GM12878 (cell line): ENCODE measurements at regions of chr1 and their contacts with region 1.

Region 1: DNA sequence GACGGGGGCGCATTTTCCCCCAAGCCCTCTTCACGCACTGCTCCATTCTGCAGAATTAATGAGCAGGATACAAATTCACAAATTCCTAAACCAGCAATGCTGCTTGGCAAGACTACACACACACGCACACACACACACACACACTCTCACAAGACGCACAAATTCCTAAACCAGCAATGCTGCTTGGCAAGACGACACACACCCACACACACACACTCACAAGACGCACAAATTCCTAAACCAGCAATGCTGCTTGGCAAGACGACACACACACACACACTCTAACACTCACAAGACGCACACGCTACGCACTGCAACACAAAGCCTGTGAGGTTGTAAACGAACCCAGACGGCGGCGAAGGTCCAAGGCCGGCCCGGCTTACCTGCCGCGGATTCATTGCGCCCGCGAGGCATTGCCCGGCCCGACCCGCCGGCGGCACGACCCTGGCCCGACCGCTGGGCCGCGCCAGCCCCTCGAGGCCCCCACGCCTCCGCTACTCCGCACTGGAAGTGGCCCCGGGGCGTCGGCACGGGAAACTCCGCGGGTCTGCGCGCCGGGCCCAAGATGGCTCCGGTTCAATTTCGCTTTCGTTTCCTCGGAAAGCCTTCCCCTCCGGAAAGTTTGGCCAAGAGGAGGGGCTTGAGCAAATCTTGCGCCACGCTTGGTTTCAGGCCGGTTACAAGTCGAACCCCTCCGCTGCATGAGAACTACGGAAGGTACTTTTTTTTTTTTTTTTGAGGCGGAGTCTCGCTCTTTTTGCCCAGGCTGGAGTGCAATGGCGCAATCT is at the start of gene ADAR:
- DNase-seq: peak; percentile 89
- ATAC-seq: peak; percentile 74
- H3K4me3 ChIP-seq: peak within 1 kb of the TSS; percentile 80
- H3K27ac ChIP-seq: peak within 1 kb of the TSS; percentile 100
- H3K4me1 ChIP-seq: peaks cover 47% of the 10 kb centered on the region
- H3K27me3 ChIP-seq: no peaks in the 10 kb centered on the region
- CTCF ChIP-seq: 0 out of 6 replicates have a peak, but pooled peaks of 2 of the 3 experiments have one; percentile 4 to 5
- EP300 ChIP-seq: 0 out of 4 replicates have a peak, but pooled peaks of 1 of the 2 experiments have one; percentile 16
- POLR2A ChIP-seq: peak; percentile 84
- RAD21 ChIP-seq: no peak
- polyA plus RNA-seq, gene ADAR: 55.5 to 105 TPM

Region 2: DNA sequence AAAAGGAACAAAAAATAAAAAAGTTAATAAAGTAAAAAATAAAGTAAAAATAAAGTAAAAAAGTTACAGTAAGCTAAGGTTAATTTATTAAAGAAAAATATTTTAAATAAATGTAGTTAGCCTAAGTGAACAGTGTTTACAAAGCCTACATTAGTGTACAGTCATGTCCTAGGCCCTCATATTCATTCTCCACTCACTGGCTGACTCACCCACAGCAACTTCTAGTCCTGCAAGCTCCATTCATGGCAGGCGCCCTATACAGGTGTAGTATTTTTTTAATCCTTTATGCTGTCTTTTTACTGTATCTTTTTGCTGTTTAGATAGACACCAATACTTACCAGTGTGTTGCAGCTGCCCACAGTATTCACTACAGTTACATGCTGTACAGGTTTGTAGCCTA is 12.2 kb before region 1 on chr1:
- CTCF ChIA-PET with region 1: interaction called, 11 read pairs
- POLR2A ChIA-PET with region 1: interaction called, 9 read pairs
- RAD21 ChIA-PET with region 1: interaction called, 5 read pairs
- SMC1A ChIA-PET with region 1: interaction called, 36 read pairs
- in situ Hi-C with region 1: no loop called
- intact Hi-C with region 1: no loop called
- DNase-seq: no peak
- ATAC-seq: no peak
- H3K4me3 ChIP-seq: no peak overlapping the region
- H3K27ac ChIP-seq: no peak overlapping the region
- H3K4me1 ChIP-seq: no peaks in the 10 kb centered on the region
- H3K27me3 ChIP-seq: no peaks in the 10 kb centered on the region
- CTCF ChIP-seq: no peak
- EP300 ChIP-seq: no peak
- POLR2A ChIP-seq: no peak
- RAD21 ChIP-seq: no peak

Region 3: GRCh38 chr1:154621875-154622274 is 14.1 kb after region 1 on chr1:
- CTCF ChIA-PET with region 1: interaction called, 17 read pairs
- POLR2A ChIA-PET with region 1: interaction called, 12 read pairs
- RAD21 ChIA-PET with region 1: interaction called, 23 read pairs
- SMC1A ChIA-PET with region 1: interaction called, 35 read pairs
- in situ Hi-C with region 1: no loop called
- intact Hi-C with region 1: loop called (anchors 2 kb)
- DNase-seq: no peak
- ATAC-seq: peak; percentile 9; the same call in 2 of the 3 replicates
- H3K4me3 ChIP-seq: no peak overlapping the region
- H3K27ac ChIP-seq: no peak overlapping the region
- H3K4me1 ChIP-seq: peaks cover 4% of the 10 kb centered on the region
- H3K27me3 ChIP-seq: no peaks in the 10 kb centered on the region
- CTCF ChIP-seq: no peak
- EP300 ChIP-seq: no peak
- POLR2A ChIP-seq: no peak
- RAD21 ChIP-seq: no peak

Region 4: GRCh38 chr1:154627257-154628120 is 19.7 kb after region 1 on chr1:
- CTCF ChIA-PET with region 1: interaction called, 17 read pairs
- POLR2A ChIA-PET with region 1: interaction called, 12 read pairs
- RAD21 ChIA-PET with region 1: interaction called, 23 read pairs
- SMC1A ChIA-PET with region 1: interaction called, 35 read pairs
- in situ Hi-C with region 1: no loop called
- intact Hi-C with region 1: loop called (anchors 2 kb)
- DNase-seq: no peak
- ATAC-seq: peak; percentile 74
- H3K4me3 ChIP-seq: peak overlapping the region; percentile 82
- H3K27ac ChIP-seq: peak overlapping the region; percentile 94
- H3K4me1 ChIP-seq: peaks cover 3% of the 10 kb centered on the region; the same call in 1 of the 2 replicates
- H3K27me3 ChIP-seq: no peaks in the 10 kb centered on the region
- CTCF ChIP-seq: no peak
- EP300 ChIP-seq: peak in 1 of 2 experiments; percentile 15; a peak in 1 of 4 replicates
- POLR2A ChIP-seq: peak; percentile 55; the same call in 1 of the 2 replicates
- RAD21 ChIP-seq: no peak

Region 5: GRCh38 chr1:154925335-154926170 is 317.8 kb after region 1 on chr1:
- CTCF ChIA-PET with region 1: no interaction called
- POLR2A ChIA-PET with region 1: no interaction called
- RAD21 ChIA-PET with region 1: no interaction called
- SMC1A ChIA-PET with region 1: no interaction called
- in situ Hi-C with region 1: no loop called
- intact Hi-C with region 1: no loop called
- DNase-seq: no peak
- ATAC-seq: no peak
- H3K4me3 ChIP-seq: no peak overlapping the region
- H3K27ac ChIP-seq: no peak overlapping the region
- H3K4me1 ChIP-seq: no peaks in the 10 kb centered on the region
- H3K27me3 ChIP-seq: no peaks in the 10 kb centered on the region
- CTCF ChIP-seq: no peak
- EP300 ChIP-seq: no peak
- POLR2A ChIP-seq: no peak
- RAD21 ChIP-seq: no peak